Dendritic cell treated with granulocyte-macrophage colony-stimulating factor and Interleukin-4, amounts not matched to agents 40 ng/mL and 50 ng/mL, for 4 days (primary cell): ENCODE measurements at regions of chr6 and their contacts with region 1.

Region 1: GRCh38 chr6:13873285-13874190 is 51.2 kb upstream of the RNF182 start:
- H3K4me3 Mint-ChIP-seq: peak overlapping the region; percentile 74
- H3K27ac Mint-ChIP-seq: peak overlapping the region; percentile 91
- H3K4me1 Mint-ChIP-seq: peaks cover 25% of the 10 kb centered on the region
- H3K27me3 Mint-ChIP-seq: peaks cover 13% of the 10 kb centered on the region

Region 2: GRCh38 chr6:13838616-13839015 is 34.9 kb before region 1 on chr6:
- intact Hi-C with region 1: loop called (anchors 5 kb)
- H3K4me3 Mint-ChIP-seq: no peak overlapping the region
- H3K27ac Mint-ChIP-seq: peak overlapping the region; percentile 91
- H3K4me1 Mint-ChIP-seq: peaks cover 58% of the 10 kb centered on the region
- H3K27me3 Mint-ChIP-seq: peaks cover 1% of the 10 kb centered on the region